Activated T-helper 1 cell treated with anti-CD3 and anti-CD28 coated beads, Interleukin-12 subunit alpha, Interleukin-12 subunit beta, Interleukin-2, Interleukin-4 antibody, amounts not matched to agents 30 ng/mL and 10 ng/mL and 1 ng/mL, durations not matched to agents 14 hours and 24 hours and 36 hours (primary cell): ENCODE measurements at regions of chr5 and their contacts with region 1.

Region 1: GRCh38 chr5:97142521-97143254 is at the start of gene LIX1:
- DNase-seq: no peak
- H3K4me3 Mint-ChIP-seq: no peak within 1 kb of the TSS
- H3K27ac Mint-ChIP-seq: no peak within 1 kb of the TSS
- H3K4me1 Mint-ChIP-seq: peaks cover 7% of the 10 kb centered on the region
- H3K27me3 Mint-ChIP-seq: peaks cover 28% of the 10 kb centered on the region
- total RNA-seq, gene LIX1: not detected in 2 replicates

Region 2: DNA sequence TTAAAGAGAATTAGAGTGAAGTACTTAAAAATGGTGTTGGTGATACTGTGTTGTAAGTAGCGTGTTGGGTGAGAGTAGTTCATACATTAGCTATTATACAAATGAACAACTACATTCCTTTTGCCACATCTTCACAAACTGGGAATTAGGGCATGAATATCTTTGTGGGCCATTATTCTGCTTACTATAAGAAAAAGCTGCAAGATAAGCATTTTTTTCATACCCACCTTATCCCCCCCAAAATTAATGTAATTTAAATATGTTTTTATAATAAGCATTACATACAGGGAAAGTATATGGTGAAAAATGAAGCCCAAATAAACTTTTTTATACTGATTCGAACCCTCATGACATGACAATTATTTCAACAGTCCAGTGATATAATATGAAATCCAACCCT is 1682.0 kb before region 1 on chr5:
- intact Hi-C with region 1: no loop called
- DNase-seq: no peak
- H3K4me3 Mint-ChIP-seq: no peak overlapping the region
- H3K27ac Mint-ChIP-seq: no peak overlapping the region
- H3K4me1 Mint-ChIP-seq: no peaks in the 10 kb centered on the region
- H3K27me3 Mint-ChIP-seq: no peaks in the 10 kb centered on the region

Region 3: DNA sequence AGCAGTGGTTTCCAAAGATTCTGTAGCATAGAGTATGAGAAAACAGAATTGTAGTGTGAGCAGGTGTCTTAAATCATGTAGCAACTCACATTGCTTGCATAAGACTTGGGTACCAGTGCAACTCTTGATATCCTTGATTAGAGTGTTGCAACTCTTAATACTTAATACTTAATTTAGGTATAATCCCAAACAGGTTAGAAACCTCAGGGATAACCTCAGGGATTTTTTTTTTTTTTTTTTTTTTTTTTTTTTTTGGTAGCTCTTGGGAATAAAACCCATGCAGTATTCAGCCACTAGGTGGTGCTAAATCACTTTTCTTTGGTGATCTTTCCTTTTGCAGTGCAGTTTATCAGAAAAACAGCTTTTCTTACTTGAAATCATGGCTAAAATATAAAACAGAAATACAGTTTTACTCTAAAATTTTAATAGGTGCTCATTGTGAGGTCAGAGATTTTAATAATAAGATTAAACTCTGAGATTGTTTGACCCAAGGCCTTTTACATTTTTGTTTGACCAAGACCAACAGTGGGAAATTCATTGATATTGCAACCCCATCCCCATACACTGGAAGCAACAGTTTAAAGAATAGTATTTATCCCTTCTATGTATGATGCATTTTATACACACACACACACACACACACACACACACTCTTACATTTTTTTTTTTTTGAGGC is 390.2 kb before region 1 on chr5:
- intact Hi-C with region 1: loop called (anchors 5 kb)
- DNase-seq: no peak
- H3K4me3 Mint-ChIP-seq: no peak overlapping the region
- H3K27ac Mint-ChIP-seq: no peak overlapping the region
- H3K4me1 Mint-ChIP-seq: peaks cover 5% of the 10 kb centered on the region
- H3K27me3 Mint-ChIP-seq: no peaks in the 10 kb centered on the region

Region 4: GRCh38 chr5:96997265-96997859 is 145.3 kb before region 1 on chr5:
- intact Hi-C with region 1: loop called (anchors 1 kb)
- DNase-seq: no peak
- H3K4me3 Mint-ChIP-seq: no peak overlapping the region
- H3K27ac Mint-ChIP-seq: no peak overlapping the region
- H3K4me1 Mint-ChIP-seq: peaks cover 35% of the 10 kb centered on the region
- H3K27me3 Mint-ChIP-seq: no peaks in the 10 kb centered on the region

Region 5: DNA sequence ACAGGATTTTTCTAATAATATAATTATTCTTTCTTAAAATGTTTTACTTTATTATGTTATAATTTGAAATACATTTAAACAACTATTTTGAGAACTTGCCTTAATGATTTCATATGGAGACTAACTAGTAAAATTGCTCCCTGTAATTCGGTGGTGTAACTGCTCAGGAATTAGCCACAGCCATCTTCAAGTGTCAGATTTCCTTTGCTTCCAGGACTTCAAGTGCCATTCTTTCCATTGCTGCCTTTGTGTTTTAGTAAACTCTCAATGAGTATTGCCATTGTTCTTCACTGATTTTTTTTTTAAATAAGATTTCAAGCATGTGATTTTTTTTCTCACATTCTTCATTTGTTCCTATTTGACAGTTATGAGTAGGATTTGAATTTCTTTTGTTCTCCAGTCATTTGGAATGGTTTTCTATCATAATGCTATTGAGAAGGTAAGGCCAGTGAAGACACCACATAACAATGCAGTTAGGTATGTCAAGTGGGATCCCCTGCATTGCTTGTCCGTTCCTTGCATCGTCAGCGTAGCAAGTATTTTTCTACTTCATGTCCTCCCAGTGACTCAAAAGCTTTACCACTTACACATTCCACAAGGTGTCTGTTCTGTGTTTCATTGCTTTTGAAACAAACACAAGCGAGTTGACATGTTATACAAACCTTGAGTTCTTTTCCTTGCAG is 123.1 kb before region 1 on chr5:
- intact Hi-C with region 1: loop called (anchors 5 kb)
- DNase-seq: no peak
- H3K4me3 Mint-ChIP-seq: no peak overlapping the region
- H3K27ac Mint-ChIP-seq: no peak overlapping the region
- H3K4me1 Mint-ChIP-seq: peaks cover 20% of the 10 kb centered on the region
- H3K27me3 Mint-ChIP-seq: no peaks in the 10 kb centered on the region